Activated T-helper 2 cell treated with anti-CD3 and anti-CD28 coated beads, Interferon-gamma antibody, Interleukin-2, Interleukin-4, amounts not matched to agents 10 μg/mL and 5 μg/mL and 100 μg/mL, durations not matched to agents 14 hours and 24 hours and 36 hours (primary cell): ENCODE measurements at regions of chr3 and their contacts with region 1.

Region 1: GRCh38 chr3:100089812-100090668 is 24.3 kb downstream of the FILIP1L start:
- DNase-seq: no peak
- H3K4me3 Mint-ChIP-seq: peak overlapping the region; percentile 0
- H3K27ac Mint-ChIP-seq: peak overlapping the region; percentile 52
- H3K4me1 Mint-ChIP-seq: peaks cover 39% of the 10 kb centered on the region
- H3K27me3 Mint-ChIP-seq: peaks cover 1% of the 10 kb centered on the region

Region 2: DNA sequence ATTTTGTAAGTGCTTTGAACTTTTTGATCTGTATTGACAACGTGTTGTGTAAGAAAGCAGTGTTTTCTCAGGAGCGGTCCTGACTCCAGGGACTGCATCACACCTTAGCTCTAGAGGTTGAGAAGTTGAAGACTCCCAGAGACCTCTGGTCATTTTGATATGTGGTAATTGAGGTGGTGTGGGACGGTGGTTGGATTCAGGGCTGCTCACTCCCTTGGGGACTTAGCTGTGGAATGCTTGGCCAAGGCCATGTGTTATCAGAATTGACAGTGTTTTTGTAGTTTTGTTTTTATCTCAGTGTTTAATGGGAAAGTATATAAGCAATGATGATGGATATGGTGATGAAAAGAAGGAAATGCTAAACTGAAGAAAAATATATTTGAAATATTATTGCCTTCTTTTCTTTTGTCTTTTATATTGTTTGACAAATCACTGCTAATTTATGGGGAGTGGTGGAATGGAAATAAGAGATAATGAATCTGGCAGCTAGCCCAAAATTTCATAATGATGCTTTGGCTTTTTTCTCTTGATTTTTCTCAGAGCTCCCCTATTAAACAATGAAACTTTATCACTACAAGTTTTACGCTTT is 256.3 kb before region 1 on chr3:
- intact Hi-C with region 1: loop called (anchors 5 kb)
- DNase-seq: no peak
- H3K4me3 Mint-ChIP-seq: no peak overlapping the region
- H3K27ac Mint-ChIP-seq: no peak overlapping the region
- H3K4me1 Mint-ChIP-seq: peaks cover 26% of the 10 kb centered on the region
- H3K27me3 Mint-ChIP-seq: no peaks in the 10 kb centered on the region

Region 3: DNA sequence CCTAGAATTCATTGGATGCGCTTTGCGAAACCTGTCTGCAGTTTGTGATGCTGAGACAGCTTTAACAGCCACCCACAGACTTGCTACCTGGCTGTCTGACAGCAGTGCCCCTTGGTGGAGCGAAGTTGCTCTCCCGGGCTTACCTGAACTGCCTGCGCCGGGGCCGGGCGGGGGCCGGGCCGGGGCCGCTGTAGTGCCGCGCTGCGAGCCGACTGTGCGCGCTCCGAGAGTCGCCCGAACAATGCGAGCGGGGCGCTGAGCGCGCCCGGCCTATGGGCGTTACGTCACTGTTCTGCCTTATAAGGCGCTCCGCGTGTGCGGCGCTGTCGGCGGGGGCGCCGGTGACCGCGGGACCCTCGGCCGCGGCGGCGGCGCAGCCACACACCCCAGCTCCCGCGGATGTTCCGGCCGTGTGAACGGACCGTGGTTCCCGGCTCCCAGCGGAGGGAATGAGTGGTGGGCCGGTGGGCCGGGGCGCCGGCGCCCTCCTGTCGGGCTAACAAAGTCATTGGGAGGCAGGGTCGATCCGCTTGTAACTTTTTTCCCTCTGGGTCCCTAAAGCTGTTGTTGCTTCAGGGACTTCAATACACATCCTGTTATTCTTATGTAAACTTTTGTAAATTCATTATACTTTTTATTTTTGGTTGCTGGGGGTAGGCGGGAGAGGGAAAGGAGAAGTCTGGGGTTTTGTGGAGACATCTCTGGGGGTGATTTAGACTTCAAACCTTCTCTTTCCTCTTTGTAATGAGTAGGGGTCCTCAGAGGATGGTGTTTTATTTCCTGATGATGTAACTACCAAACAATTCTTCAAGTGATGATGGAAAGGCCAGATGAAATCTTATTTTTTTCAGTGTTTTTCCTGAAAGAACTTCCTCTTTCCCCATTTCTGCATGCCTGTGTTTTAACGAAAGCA is 213.9 kb before region 1 on chr3:
- intact Hi-C with region 1: loop called (anchors 2 kb)
- DNase-seq: peak; percentile 70
- H3K4me3 Mint-ChIP-seq: peak overlapping the region; percentile 83
- H3K27ac Mint-ChIP-seq: no peak overlapping the region
- H3K4me1 Mint-ChIP-seq: peaks cover 52% of the 10 kb centered on the region
- H3K27me3 Mint-ChIP-seq: peaks cover 1% of the 10 kb centered on the region

Region 4: DNA sequence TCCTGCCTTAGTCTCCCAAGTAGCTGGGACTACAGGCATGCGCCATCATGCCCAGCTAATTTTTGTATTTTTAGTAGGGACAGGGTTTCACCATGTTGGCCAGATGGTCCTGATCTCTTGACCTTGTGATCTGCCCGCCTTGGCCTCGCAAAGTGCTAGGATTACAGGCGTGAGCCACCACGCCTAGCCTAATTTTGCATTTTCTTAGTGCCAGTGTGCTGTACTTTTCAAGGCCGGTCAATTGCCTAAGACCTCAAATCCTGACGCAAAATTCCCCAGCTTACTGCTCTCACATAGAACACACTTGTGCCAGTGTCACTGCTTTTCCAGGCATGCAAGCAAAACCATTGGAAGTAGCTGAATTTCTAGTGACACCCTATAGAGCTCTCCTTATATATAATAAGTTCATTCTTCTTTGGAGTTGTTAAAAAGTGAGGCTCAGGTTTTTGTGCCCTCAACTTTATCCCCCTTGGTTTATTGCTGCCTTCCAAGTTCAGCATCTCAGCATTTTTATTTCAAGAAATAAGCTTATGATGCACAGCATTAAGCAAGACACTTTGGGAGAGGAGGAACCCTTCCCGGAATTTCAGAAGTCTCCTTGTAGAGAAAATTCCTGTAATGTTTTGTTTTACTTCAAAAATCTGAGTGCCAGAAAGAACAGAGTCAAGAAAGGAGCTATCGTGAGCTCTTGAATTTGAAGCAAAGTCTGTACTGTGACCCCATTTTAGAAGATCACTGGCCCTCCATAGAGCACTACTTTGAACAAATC is 69.0 kb before region 1 on chr3:
- intact Hi-C with region 1: no loop called
- DNase-seq: no peak
- H3K4me3 Mint-ChIP-seq: no peak overlapping the region
- H3K27ac Mint-ChIP-seq: no peak overlapping the region
- H3K4me1 Mint-ChIP-seq: peaks cover 7% of the 10 kb centered on the region
- H3K27me3 Mint-ChIP-seq: no peaks in the 10 kb centered on the region

Region 5: DNA sequence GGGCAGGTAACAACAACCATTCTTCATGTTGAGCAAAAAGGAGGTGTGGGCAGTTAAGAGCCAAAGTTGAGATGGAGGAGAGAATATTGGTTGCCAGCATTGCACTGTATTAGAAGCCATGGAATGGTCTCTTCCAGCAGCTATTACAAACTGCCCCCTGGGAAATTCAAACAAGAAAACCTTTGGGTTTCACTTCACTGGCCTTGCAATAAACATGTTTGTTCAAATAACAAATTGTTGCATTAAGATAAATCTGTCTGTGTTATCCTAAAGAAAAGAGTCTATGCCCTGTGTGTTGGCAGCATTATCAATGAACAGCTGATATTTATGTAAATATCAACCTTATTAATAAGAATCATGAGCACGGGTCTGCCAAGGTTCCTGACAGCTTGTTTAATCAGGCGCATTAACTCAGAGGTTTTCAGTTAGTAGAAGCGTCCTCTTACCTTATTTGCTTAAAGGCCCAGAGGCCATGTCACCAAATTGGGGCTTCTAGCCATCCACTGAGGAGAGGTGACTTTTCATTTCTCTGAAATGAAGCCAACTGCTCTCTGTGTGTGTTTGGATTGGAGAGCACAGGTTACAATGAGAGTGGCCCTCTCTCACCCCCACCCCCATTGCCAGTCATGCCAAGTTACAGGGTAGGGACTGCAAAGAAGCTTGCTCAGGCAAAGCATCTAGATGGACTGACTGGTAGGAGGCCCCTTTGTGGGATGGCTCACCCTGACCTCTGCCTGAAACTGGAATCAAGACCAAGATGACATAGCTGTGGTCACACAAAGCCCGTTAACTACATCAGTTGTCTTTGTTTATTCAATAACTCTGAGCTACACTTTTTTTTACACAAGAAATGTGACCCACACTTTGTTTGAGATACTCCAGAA is 13.8 kb after region 1 on chr3:
- intact Hi-C with region 1: loop called (anchors 2 kb)
- DNase-seq: no peak
- H3K4me3 Mint-ChIP-seq: no peak overlapping the region
- H3K27ac Mint-ChIP-seq: peak overlapping the region; percentile 72
- H3K4me1 Mint-ChIP-seq: peaks cover 44% of the 10 kb centered on the region
- H3K27me3 Mint-ChIP-seq: no peaks in the 10 kb centered on the region

Region 6: GRCh38 chr3:100144251-100144866 is 54.3 kb after region 1 on chr3:
- intact Hi-C with region 1: no loop called
- DNase-seq: no peak
- H3K4me3 Mint-ChIP-seq: no peak overlapping the region
- H3K27ac Mint-ChIP-seq: no peak overlapping the region
- H3K4me1 Mint-ChIP-seq: peaks cover 15% of the 10 kb centered on the region
- H3K27me3 Mint-ChIP-seq: no peaks in the 10 kb centered on the region